Calu3 (cell line): ENCODE measurements at regions of chr17 and their contacts with region 1.

Region 1: GRCh38 chr17:39621523-39622379 is 5.0 kb upstream of the PPP1R1B start:
- DNase-seq: peak; percentile 100
- H3K4me3 Mint-ChIP-seq: peak overlapping the region; percentile 18
- H3K27ac Mint-ChIP-seq: peak overlapping the region; percentile 3
- H3K4me1 Mint-ChIP-seq: peaks cover 55% of the 10 kb centered on the region
- H3K27me3 Mint-ChIP-seq: peaks cover 83% of the 10 kb centered on the region
- CTCF ChIP-seq: no peak

Region 2: DNA sequence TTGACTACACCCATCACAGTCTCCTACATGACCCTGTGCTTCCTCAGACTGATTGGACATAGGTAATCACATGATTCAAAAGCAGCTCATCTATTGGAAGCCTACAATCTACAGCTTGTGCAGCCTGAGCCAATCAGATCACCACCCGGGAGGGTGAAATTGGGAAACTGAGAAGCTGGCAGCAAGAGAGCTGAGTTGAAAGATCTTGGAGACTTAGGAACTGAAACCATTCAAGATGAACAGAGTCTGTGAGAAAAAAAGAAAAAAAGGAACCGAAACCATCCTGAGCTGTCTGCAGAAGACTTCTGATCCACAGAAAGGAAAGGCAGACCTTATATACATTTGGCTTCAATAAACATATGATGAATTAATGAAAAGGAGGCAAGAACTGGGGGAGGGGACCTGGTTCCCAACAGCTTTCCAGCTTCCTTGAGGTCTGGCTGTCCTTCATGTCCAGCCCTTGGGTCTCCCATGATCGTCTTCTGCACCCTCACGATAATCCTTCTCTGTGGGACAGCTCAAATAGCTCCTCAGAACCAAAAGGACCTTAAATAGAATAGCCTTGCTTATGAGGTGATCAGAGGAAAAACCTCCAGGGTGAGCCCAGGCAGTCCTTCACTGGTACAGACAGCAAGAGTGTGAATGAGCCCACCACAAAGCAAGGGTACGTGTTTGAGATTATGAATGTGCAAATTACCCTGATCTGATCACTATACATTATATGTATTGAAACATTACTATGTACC is 502.9 kb before region 1 on chr17:
- CTCF ChIA-PET with region 1: no interaction called
- intact Hi-C with region 1: no loop called
- DNase-seq: no peak
- H3K4me3 Mint-ChIP-seq: no peak overlapping the region
- H3K27ac Mint-ChIP-seq: no peak overlapping the region
- H3K4me1 Mint-ChIP-seq: no peaks in the 10 kb centered on the region
- H3K27me3 Mint-ChIP-seq: peaks cover 89% of the 10 kb centered on the region
- CTCF ChIP-seq: no peak

Region 3: DNA sequence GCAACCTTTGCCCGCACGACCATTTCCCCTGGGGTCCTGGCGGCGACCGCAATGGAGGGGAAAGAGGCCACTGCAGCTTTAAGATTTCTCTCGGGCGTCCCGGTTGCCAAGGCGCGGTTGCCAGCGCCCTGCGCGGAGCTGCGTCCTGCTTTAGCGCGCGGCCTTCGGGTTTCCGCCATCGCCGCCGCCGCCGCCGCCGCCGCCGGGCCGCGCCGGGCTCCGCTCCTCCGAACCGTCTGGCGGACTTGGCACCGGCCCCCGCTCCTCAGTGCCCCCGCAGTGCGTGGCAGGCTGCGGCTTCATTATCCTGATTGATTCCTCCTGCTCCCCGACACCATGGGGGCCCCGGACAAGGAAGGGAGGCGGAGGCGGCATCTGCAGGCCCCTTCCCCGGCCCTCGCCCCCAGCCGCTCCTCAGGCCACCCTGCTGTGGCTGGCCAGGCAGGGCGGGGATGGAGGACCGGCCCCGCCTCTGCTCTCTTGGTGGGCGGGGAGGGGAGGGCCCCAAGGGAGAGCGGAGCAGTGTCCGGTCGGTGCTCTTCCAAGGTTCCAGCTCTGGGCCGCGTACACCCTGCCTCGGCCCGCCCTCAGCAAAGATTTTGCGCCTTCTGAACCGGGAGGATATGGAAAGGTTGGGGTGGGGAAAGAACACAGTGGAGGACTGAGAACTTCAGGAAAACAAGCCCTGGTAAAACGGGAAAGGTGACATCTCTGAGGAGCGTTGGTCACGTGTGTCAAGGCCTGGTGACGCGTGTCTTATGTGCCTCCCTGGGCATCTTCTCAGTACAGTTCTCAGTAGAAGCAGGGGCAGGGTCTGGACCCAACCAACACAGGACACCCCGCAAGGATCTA is 48.1 kb before region 1 on chr17:
- CTCF ChIA-PET with region 1: interaction called, 30 read pairs
- intact Hi-C with region 1: no loop called
- DNase-seq: peak; percentile 93
- H3K4me3 Mint-ChIP-seq: peak overlapping the region; percentile 81
- H3K27ac Mint-ChIP-seq: peak overlapping the region; percentile 74
- H3K4me1 Mint-ChIP-seq: peaks cover 7% of the 10 kb centered on the region
- H3K27me3 Mint-ChIP-seq: peaks cover 29% of the 10 kb centered on the region
- CTCF ChIP-seq: no peak

Region 4: GRCh38 chr17:39717660-39718059 is 95.9 kb after region 1 on chr17:
- CTCF ChIA-PET with region 1: interaction called, 42,089 read pairs
- intact Hi-C with region 1: loop called (anchors 1 kb)
- DNase-seq: no peak
- H3K4me3 Mint-ChIP-seq: no peak overlapping the region
- H3K27ac Mint-ChIP-seq: peak overlapping the region; percentile 2
- H3K4me1 Mint-ChIP-seq: peaks cover 21% of the 10 kb centered on the region
- H3K27me3 Mint-ChIP-seq: no peaks in the 10 kb centered on the region
- CTCF ChIP-seq: no peak

Region 5: GRCh38 chr17:39822051-39822451 is 200.3 kb after region 1 on chr17:
- CTCF ChIA-PET with region 1: interaction called, 113 read pairs
- intact Hi-C with region 1: no loop called
- DNase-seq: peak; percentile 59
- H3K4me3 Mint-ChIP-seq: no peak overlapping the region
- H3K27ac Mint-ChIP-seq: no peak overlapping the region
- H3K4me1 Mint-ChIP-seq: peaks cover 9% of the 10 kb centered on the region
- H3K27me3 Mint-ChIP-seq: no peaks in the 10 kb centered on the region
- CTCF ChIP-seq: no peak

Region 6: DNA sequence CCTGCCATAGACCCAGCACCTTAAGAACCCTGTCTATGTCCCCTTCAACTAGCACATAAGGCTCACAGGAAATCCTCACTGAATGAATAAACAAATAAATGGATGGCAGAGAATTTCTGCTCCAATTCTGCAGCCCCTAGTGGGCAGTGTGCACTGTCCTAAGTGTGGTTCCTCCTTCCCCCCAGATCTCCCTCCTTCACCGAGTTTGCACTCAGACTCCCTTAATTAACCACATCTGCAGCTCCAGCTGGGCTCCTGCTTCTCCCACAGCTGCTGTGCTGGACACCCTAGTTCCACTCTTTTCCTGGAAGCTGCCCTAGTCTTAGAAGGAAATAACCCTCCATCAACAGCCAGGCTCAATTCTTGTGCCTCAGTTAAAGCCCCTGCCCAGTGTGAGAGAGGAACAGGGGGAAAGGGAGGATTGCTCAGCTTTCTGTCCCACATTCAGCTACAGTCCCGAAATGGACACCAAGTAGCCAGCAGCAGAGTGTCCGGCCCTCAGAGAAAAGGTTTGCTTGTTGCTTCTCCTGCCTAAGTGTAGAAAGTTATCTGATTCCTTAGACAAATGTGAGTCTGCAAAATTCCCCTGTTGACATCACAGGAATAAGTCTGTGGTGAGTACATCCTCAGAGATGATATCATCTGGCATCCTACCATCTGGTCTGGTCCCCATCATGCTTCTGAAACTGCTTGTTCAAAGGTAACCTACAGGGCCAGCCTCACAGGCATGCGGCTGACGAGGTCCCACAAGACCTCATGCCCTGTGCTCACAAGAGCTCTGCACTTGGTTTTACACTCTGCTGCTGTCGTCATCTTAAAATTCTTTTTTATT is 318.1 kb after region 1 on chr17:
- CTCF ChIA-PET with region 1: interaction called, 5,681 read pairs
- intact Hi-C with region 1: loop called (anchors 1 kb)
- DNase-seq: peak; percentile 76
- H3K4me3 Mint-ChIP-seq: no peak overlapping the region
- H3K27ac Mint-ChIP-seq: no peak overlapping the region
- H3K4me1 Mint-ChIP-seq: peaks cover 12% of the 10 kb centered on the region
- H3K27me3 Mint-ChIP-seq: peaks cover 63% of the 10 kb centered on the region
- CTCF ChIP-seq: no peak

Region 7: DNA sequence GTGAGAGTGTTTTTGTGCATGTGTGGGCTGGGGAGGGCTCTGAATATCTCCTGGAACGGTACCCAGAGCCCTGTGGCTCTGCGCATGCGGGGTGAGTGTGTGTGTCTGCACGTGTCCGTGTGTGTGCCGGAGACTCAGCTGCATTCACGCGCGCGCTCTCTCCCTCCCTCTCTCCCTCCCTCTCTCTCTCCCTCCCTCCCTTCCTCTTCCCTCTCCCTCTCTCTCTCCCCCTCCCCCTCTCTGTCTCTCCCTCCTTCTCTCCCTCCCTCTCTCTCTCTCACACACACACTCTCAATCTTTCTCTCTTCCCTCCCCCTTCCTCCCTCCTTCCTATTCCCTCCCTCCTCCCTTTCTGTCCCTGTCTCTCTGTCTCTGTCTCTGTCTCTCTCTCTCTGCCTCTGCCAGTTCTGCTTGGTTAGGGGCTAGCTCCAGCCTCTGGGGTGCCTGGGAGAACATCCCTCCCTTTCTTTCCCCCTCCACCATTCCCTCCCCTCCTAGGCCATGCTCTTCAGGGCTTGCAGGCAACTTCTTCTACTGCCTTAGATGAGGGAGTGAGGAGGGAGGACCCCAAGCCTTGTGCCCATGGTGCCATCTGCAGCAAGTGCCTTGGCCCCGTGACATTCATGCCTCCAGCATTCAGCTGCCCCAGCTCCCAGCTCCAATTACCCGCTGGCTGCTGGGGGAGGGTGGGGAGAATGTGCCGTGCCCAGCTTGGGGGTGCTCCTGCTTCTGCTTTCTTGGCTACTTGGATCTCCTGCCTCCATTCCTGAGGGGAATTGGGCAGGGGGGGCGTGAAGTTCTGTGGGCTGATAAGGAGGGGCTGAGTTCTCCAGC is 447.4 kb after region 1 on chr17:
- CTCF ChIA-PET with region 1: interaction called, 16 read pairs
- intact Hi-C with region 1: no loop called
- DNase-seq: peak; percentile 71
- H3K4me3 Mint-ChIP-seq: peak overlapping the region; percentile 63
- H3K27ac Mint-ChIP-seq: no peak overlapping the region
- H3K4me1 Mint-ChIP-seq: peaks cover 94% of the 10 kb centered on the region
- H3K27me3 Mint-ChIP-seq: no peaks in the 10 kb centered on the region
- CTCF ChIP-seq: no peak

Region 8: DNA sequence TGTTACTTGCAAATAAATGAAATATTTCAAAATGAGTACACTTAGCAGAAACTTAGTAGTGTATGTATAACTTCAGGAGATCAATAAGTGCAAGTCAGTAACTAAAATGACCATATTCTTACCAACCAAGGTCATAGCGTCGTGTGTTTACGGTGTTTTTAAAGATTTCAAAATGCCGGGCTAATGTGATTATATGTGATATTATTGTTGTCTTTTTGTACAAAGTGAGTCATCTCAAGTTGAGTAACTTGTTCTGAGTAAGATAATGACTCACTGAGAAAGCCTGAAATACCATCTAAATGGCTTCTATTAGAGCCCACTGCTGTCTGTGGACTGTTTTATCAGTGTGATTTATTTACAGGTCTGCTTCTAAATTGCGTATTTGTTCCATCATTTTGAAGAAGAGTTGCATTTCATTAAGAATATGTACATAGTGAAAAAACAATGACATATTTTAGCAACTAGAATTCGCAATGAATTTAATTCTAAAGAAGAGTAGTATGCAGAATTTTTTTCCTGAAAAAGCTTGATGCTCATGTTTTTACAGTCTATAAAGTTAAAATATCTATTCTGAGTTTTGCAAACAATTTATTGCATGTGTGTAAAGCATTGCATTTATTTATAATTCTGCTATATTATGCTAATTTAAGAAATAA is 1232.5 kb after region 1 on chr17:
- CTCF ChIA-PET with region 1: interaction called, 3 read pairs
- intact Hi-C with region 1: loop called (anchors 2 kb)
- DNase-seq: no peak
- H3K4me3 Mint-ChIP-seq: peak overlapping the region; percentile 33
- H3K27ac Mint-ChIP-seq: peak overlapping the region; percentile 86
- H3K4me1 Mint-ChIP-seq: peaks cover 85% of the 10 kb centered on the region
- H3K27me3 Mint-ChIP-seq: no peaks in the 10 kb centered on the region
- CTCF ChIP-seq: no peak